ENCODE measurements at regions of chr17 and their contacts with region 1.

Region 1: DNA sequence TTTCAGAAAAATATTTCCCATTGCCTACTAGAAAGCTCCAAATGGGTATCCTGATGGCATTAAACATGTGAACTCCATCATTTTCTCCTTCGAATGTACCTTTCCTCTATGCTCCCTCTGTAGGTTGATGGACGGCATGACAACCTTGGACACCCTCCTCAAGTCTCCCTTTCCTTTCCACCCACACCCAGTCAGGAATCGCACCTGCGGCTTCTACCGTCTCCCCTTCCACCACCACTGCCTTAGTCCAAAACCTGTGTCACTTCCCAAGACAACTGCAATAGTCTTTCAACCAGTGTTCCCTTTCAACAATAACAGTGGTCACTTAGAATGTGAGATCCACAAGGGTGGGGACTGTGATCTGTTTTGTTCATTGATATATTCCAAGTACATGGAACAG is 233.1 kb upstream of the AXIN2 start:
- DNase-seq: peak in 4 of 14 experiments; percentile 9 to 47 (median 36)
- ATAC-seq: peak; percentile 56
- H3K4me3 ChIP-seq: no peak overlapping the region
- H3K4me3 Mint-ChIP-seq: no peak overlapping the region
- H3K27ac ChIP-seq: no peak overlapping the region
- H3K27ac Mint-ChIP-seq: no peak overlapping the region
- H3K4me1 ChIP-seq: no peaks in the 10 kb centered on the region
- H3K4me1 Mint-ChIP-seq: no peaks in the 10 kb centered on the region
- H3K27me3 ChIP-seq: no peaks in the 10 kb centered on the region
- H3K27me3 Mint-ChIP-seq: no peaks in the 10 kb centered on the region
- CTCF ChIP-seq: peak; percentile 60

Region 2: DNA sequence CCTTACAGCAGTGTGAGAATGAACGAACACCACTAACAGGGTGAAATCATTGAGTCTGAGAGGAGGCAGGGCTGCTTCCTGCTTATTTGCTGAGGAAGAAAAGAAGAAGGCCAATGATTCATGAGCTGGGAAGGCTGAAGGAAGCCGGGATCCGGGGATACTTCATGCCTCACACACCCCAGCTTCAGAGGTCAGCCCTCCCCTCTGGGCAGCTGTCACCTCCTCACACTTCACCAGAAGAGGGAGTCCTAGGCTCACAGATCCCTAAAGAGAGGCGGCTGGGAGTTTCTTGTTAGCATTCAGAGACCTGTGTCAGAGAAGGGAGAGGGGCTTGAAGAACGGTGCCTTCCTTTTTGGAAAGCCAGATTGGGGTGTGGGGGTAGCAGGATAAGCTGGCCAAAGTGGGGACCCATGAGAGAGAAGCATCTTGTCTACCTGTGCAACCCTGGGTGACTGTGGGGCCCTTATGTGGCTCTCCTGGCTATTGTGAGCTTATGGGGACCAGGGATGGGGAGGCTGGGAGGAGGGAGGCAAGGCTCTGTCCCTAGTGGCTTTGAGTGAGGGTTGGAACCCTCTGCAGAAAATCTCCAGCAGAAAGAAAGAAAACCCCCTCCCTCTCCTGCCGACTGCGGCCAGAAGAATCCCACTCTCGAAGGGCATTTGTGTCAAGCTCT is 562.8 kb before region 1 on chr17:
- CTCF ChIA-PET with region 1: interaction called, 4 read pairs
- POLR2A ChIA-PET with region 1: no interaction called
- intact Hi-C with region 1: loop called in 1 of 2 experiments (anchors 5 kb)
- DNase-seq: peak in 12 of 14 experiments; percentile 5 to 70 (median 20)
- ATAC-seq: no peak
- H3K4me3 ChIP-seq: no peak overlapping the region
- H3K4me3 Mint-ChIP-seq: no peak overlapping the region
- H3K27ac ChIP-seq: no peak overlapping the region
- H3K27ac Mint-ChIP-seq: no peak overlapping the region
- H3K4me1 ChIP-seq: peaks cover 29% of the 10 kb centered on the region
- H3K4me1 Mint-ChIP-seq: peaks cover 19% of the 10 kb centered on the region
- H3K27me3 ChIP-seq: no peaks in the 10 kb centered on the region
- H3K27me3 Mint-ChIP-seq: no peaks in the 10 kb centered on the region
- CTCF ChIP-seq: peak; percentile 41

Region 3: DNA sequence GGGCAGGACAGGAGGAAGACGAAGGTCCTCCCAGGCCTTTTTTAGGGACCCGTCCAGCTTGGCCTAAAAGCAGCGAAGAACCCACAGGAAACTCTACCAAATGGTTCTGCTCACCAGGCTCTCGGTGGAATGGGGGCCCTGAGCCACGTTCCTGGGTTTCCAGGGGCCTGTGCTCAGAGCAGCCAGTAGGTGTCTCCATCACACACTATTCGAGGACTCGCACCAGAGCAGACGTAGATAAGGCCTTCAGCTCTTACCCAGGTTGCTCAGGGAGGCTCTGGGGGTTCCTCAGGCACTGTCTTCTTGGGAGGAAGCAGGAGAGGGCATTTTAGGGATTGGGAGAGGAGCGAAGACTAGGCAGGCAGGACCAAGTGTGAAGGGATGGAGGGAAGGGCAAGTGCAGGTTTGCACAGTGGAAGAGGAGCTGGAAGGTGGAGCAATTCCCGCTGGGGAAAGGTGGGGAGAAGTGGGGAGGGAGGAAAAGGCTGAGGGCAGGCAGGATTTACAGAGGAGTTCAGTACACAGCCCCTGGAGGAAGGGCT is 500.3 kb before region 1 on chr17:
- CTCF ChIA-PET with region 1: interaction called, 4 read pairs
- POLR2A ChIA-PET with region 1: no interaction called
- intact Hi-C with region 1: loop called (anchors 1 kb)
- DNase-seq: peak; percentile 32 to 78 (median 50)
- ATAC-seq: peak; percentile 88
- H3K4me3 ChIP-seq: no peak overlapping the region
- H3K4me3 Mint-ChIP-seq: no peak overlapping the region
- H3K27ac ChIP-seq: no peak overlapping the region
- H3K27ac Mint-ChIP-seq: no peak overlapping the region
- H3K4me1 ChIP-seq: peaks cover 7% of the 10 kb centered on the region
- H3K4me1 Mint-ChIP-seq: peaks cover 5% of the 10 kb centered on the region
- H3K27me3 ChIP-seq: no peaks in the 10 kb centered on the region
- H3K27me3 Mint-ChIP-seq: peaks cover 3% of the 10 kb centered on the region
- CTCF ChIP-seq: peak; percentile 76

Region 4: GRCh38 chr17:65455972-65456343 is 338.6 kb before region 1 on chr17:
- CTCF ChIA-PET with region 1: interaction called, 3 read pairs
- POLR2A ChIA-PET with region 1: no interaction called
- intact Hi-C with region 1: loop called (anchors 5 kb)
- DNase-seq: peak in 13 of 14 experiments; percentile 5 to 64 (median 12)
- ATAC-seq: peak; percentile 61
- H3K4me3 ChIP-seq: no peak overlapping the region
- H3K4me3 Mint-ChIP-seq: no peak overlapping the region
- H3K27ac ChIP-seq: no peak overlapping the region
- H3K27ac Mint-ChIP-seq: no peak overlapping the region
- H3K4me1 ChIP-seq: peaks cover 7% of the 10 kb centered on the region
- H3K4me1 Mint-ChIP-seq: no peaks in the 10 kb centered on the region
- H3K27me3 ChIP-seq: peaks cover 0 to 3% of the 10 kb centered on the region in 2 experiments
- H3K27me3 Mint-ChIP-seq: no peaks in the 10 kb centered on the region
- CTCF ChIP-seq: peak; percentile 45